Calu3 (cell line): ENCODE measurements at regions of chr2 and their contacts with region 1.

Region 1: GRCh38 chr2:21571686-21572085 is 447.9 kb downstream of the TDRD15 start:
- DNase-seq: no peak
- H3K4me3 Mint-ChIP-seq: no peak overlapping the region
- H3K27ac Mint-ChIP-seq: no peak overlapping the region
- H3K4me1 Mint-ChIP-seq: no peaks in the 10 kb centered on the region
- H3K27me3 Mint-ChIP-seq: no peaks in the 10 kb centered on the region
- CTCF ChIP-seq: no peak

Region 2: GRCh38 chr2:21372654-21373053 is 199.0 kb before region 1 on chr2:
- CTCF ChIA-PET with region 1: no interaction called
- intact Hi-C with region 1: no loop called
- DNase-seq: no peak
- H3K4me3 Mint-ChIP-seq: no peak overlapping the region
- H3K27ac Mint-ChIP-seq: no peak overlapping the region
- H3K4me1 Mint-ChIP-seq: no peaks in the 10 kb centered on the region
- H3K27me3 Mint-ChIP-seq: peaks cover 25% of the 10 kb centered on the region
- CTCF ChIP-seq: no peak

Region 3: DNA sequence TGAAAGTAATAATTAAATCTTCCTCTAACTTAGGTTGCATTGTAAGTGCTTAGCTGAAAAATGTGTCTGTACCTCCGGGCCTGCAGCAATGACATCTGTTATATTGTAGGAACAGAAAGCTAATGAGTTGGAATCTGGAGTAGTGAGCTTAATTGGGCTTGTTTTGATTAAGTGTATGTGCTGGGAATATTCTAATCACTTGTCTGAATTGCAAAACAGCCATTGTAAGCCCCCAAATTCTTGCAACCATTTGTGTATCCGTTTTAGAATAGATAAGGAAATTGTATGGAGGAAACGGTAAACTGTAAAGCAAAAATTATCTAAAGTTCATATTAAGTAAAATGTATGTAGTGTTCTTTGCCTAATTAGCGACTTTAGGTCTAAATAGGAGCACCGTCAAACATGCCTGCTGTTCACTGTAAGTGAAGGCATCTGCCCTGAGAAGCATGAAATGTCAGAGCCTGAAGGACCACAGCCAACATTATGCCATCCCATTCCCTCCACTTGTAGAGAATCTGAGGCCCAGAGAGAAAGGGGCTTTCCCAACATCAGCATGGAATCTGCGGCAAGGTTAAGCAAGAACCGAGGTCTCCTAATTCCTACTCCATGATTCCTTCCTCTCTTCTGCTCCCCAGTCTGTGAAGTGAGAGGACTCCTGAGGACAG is 18.5 kb after region 1 on chr2:
- CTCF ChIA-PET with region 1: no interaction called
- intact Hi-C with region 1: loop called (anchors 1 kb)
- DNase-seq: no peak
- H3K4me3 Mint-ChIP-seq: no peak overlapping the region
- H3K27ac Mint-ChIP-seq: no peak overlapping the region
- H3K4me1 Mint-ChIP-seq: no peaks in the 10 kb centered on the region
- H3K27me3 Mint-ChIP-seq: no peaks in the 10 kb centered on the region
- CTCF ChIP-seq: no peak